ENCODE measurements at regions of chr2 and their contacts with region 1.

Region 1: GRCh38 chr2:64750817-64751285 is 97.1 kb upstream of the SERTAD2 start:
- DNase-seq: peak in 8 of 9 donors; percentile 87 to 97 (median 96)
- ATAC-seq: peak; percentile 90
- H3K4me3 ChIP-seq: peak overlapping the region; percentile 98
- H3K4me3 Mint-ChIP-seq: peak overlapping the region; percentile 91 to 100 (median 99)
- H3K27ac ChIP-seq: peak overlapping the region; percentile 91
- H3K27ac Mint-ChIP-seq: peak overlapping the region; percentile 91 to 99 (median 96)
- H3K4me1 ChIP-seq: peaks cover 3 to 13% of the 10 kb centered on the region in 2 donors
- H3K4me1 Mint-ChIP-seq: peaks cover 5 to 34% (median 29%) of the 10 kb centered on the region in 7 donors
- H3K27me3 ChIP-seq: no peaks in the 10 kb centered on the region
- H3K27me3 Mint-ChIP-seq: no peaks in the 10 kb centered on the region

Region 2: DNA sequence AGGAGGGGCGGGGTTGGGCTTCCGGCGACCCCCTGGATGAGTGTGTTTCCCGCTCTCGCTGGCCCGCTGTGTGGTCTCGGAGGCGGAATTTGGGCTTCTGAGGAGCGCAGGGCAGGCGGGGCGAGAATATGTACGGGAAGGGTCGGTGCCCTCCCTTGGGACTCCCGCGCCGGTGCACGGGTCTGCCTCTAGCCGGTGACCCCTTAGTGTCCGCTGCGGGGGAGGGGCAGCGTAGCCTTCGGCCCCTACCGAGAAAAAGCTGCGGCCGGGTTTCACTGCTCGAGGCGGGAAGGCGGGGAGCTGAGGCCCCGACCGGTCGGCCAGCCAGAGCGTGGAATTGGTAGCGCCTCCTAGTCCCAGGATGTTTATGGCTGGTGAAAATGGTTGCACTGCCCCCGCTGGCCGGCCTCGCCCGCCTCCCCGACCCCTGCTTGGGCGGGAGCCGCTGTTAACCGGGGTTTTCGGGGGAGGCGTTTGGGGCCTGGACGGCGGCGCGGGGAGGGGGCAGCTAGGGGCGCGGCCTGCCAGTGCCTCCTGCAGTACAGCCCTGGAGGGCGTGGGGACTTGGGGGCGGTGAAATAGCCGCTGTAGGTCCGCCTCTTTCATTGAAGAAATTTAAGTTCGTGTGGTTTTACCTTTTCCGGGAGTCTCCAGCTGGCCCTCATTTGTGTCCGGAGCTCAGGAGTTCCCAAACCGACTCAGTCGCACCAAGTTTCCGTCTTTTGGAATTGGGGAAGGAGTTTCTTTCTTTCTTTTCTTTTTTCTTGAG is 909.4 kb before region 1 on chr2 and contains the start of gene UGP2:
- CTCF ChIA-PET with region 1: no interaction called
- POLR2A ChIA-PET with region 1: no interaction called
- intact Hi-C with region 1: loop called (anchors 1 to 5 kb)
- DNase-seq: peak; percentile 68 to 89 (median 83)
- ATAC-seq: peak; percentile 77
- H3K4me3 ChIP-seq: peak within 1 kb of the TSS; percentile 82
- H3K4me3 Mint-ChIP-seq: peak within 1 kb of the TSS; percentile 97 to 100 (median 99)
- H3K27ac ChIP-seq: peak within 1 kb of the TSS; percentile 90
- H3K27ac Mint-ChIP-seq: peak within 1 kb of the TSS; percentile 95 to 99 (median 97)
- H3K4me1 ChIP-seq: peaks cover 5 to 24% of the 10 kb centered on the region in 2 donors
- H3K4me1 Mint-ChIP-seq: peaks cover 27 to 60% (median 53%) of the 10 kb centered on the region in 7 donors
- H3K27me3 ChIP-seq: no peaks in the 10 kb centered on the region
- H3K27me3 Mint-ChIP-seq: peaks cover 0 to 14% (median 0%) of the 10 kb centered on the region in 5 donors
- total RNA-seq, gene UGP2: 69.5 to 134 (median 92.4) TPM

Region 3: DNA sequence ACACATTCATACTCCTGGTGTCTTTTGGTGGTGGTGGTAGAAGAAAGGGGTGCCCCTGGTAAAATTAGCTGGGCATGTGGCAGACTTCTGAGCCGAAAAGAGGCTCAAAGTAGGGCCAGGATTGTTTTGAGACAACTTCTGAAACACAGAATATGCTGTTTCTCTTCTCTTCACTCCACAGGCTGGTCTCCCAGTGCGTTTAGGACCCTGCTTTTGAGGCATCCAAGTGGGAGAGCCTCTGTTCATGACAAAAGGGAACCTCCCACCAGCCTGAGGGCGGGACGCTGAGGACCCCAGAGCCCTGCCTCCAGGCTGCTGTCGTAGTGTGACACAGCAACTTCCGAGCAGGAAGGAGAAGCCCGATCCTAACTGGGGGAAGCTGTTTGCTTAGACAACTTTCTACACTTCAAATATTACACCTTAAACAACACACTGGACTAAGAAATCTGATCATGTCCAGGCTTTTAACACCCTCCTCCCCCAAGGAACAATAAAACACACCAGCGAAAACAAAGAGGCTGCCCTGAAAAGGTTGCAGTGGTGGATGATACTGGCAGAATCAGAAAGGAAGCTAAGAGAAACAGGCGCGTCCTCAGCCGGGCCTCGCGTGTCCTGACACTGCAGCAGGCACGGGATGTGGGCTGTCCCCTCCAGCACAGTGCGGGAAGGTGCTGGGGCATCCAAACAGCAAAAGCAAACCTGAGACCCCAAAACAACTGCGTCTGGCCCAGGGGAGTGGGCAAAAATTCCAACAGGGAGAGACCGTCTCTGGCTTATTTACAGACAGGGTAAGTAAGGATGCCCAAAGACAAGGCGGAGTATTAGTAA is 106.5 kb before region 1 on chr2:
- CTCF ChIA-PET with region 1: interaction called, 34 read pairs
- POLR2A ChIA-PET with region 1: interaction called, 433 read pairs
- intact Hi-C with region 1: loop called (anchors 1 to 2 kb)
- DNase-seq: peak in 8 of 9 donors; percentile 48 to 57 (median 53)
- ATAC-seq: peak; percentile 79
- H3K4me3 ChIP-seq: peak overlapping the region; percentile 62
- H3K4me3 Mint-ChIP-seq: peak overlapping the region; percentile 80 to 93 (median 90)
- H3K27ac ChIP-seq: peak overlapping the region; percentile 52
- H3K27ac Mint-ChIP-seq: peak overlapping the region; percentile 34 to 94 (median 88)
- H3K4me1 ChIP-seq: peaks cover 4 to 72% of the 10 kb centered on the region in 2 donors
- H3K4me1 Mint-ChIP-seq: peaks cover 45 to 100% (median 89%) of the 10 kb centered on the region in 7 donors
- H3K27me3 ChIP-seq: no peaks in the 10 kb centered on the region
- H3K27me3 Mint-ChIP-seq: no peaks in the 10 kb centered on the region

Region 4: DNA sequence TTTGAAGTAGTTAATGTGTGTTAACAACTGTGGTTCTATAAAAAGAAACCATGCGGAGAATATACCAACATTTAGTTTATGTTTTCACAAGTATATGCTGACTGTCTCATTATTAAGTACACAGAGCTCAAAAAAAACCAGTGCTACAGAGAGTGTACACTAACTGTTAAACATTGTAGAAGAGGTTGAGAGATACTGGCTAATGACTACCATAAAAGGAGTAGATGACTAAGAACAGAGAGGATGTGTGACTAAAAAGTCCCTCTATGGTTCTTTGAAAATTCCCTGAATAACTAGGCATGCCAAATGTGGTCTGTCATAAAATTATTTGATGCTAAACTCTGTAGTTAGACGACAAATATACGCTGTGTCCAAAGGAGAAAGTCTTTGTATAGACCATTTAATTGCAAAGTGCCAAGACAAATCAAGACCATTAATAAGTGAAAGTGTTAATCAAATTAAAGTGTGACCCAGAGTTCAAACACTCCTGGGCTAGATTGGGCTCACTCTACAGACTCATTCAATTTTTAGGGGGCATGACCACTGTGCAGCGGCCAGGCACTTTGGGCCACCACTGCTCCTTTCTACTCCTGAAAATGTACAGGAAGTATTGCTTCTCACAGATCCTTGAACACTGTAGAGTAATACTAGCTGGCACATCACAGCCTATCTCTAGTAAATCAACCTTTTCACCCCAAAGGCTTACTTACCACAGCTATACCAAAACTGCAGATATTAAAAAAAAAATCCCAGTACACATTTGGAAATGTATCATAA is 52.0 kb before region 1 on chr2:
- CTCF ChIA-PET with region 1: no interaction called
- POLR2A ChIA-PET with region 1: interaction called, 4 read pairs
- intact Hi-C with region 1: loop called in 1 of 2 experiments (anchors 1 kb)
- DNase-seq: no peak
- ATAC-seq: peak; percentile 76
- H3K4me3 ChIP-seq: no peak overlapping the region
- H3K4me3 Mint-ChIP-seq: peak overlapping the region in 1 of 10 donors; percentile 80
- H3K27ac ChIP-seq: no peak overlapping the region
- H3K27ac Mint-ChIP-seq: peak overlapping the region in 4 of 9 donors; percentile 2 to 79 (median 36)
- H3K4me1 ChIP-seq: peaks cover 8 to 12% of the 10 kb centered on the region in 2 donors
- H3K4me1 Mint-ChIP-seq: peaks cover 21 to 59% (median 41%) of the 10 kb centered on the region in 7 donors
- H3K27me3 ChIP-seq: no peaks in the 10 kb centered on the region
- H3K27me3 Mint-ChIP-seq: no peaks in the 10 kb centered on the region

Region 5: DNA sequence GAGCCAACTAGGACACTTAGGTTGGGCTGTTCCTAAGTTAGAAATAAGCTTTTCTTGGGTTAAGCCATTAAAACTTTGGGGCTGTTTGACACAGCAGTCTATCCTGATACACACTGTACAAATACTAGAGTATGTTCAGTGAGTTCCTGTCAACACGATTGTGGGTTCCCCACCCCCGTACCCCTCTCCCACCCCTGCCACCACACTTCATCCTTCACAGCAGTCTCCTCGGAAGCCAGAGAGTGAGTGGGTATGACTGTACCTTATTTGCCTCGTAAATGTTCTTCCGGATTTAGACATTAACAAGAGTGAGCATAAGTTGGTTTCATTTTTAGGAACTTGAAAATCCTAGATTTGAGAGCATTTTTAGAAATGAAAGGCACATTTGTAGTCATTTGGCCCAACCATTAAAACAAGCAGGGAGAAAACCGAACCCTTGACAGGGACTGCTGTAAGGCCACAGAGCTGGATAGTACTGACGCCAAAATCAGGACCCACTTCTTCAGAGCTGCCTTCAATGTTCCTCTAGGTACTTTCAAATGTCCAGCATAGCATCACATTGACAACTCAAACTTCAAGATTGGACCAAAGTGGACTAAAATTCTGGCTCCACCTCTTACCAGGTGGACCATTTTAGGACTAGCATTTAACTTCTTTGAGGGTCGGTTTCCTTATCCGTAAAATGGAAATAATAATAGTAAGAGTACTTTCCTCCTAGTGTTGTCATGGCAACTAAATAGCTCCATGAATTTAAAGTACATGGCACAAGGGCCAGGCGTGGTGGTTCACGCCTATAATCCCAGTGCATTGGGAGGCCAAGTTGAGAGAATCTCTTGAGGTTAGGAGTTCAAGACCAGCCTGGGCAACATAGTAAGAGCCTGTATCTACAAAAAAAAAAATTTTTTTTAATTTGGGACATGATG is 69.2 kb after region 1 on chr2:
- CTCF ChIA-PET with region 1: interaction called, 3 read pairs
- POLR2A ChIA-PET with region 1: interaction called, 36 read pairs
- intact Hi-C with region 1: loop called (anchors 1 to 2 kb)
- DNase-seq: peak in 8 of 9 donors; percentile 36 to 81 (median 66)
- ATAC-seq: peak; percentile 95
- H3K4me3 ChIP-seq: peak overlapping the region; percentile 19
- H3K4me3 Mint-ChIP-seq: peak overlapping the region; percentile 46 to 88 (median 77)
- H3K27ac ChIP-seq: peak overlapping the region; percentile 59
- H3K27ac Mint-ChIP-seq: peak overlapping the region; percentile 87 to 97 (median 95)
- H3K4me1 ChIP-seq: peaks cover 19 to 25% of the 10 kb centered on the region in 2 donors
- H3K4me1 Mint-ChIP-seq: peaks cover 12 to 41% (median 31%) of the 10 kb centered on the region in 7 donors
- H3K27me3 ChIP-seq: no peaks in the 10 kb centered on the region
- H3K27me3 Mint-ChIP-seq: no peaks in the 10 kb centered on the region

Region 6: GRCh38 chr2:65056215-65057053 is 305.6 kb after region 1 on chr2 and contains the start of gene CEP68:
- CTCF ChIA-PET with region 1: no interaction called
- POLR2A ChIA-PET with region 1: no interaction called
- intact Hi-C with region 1: loop called (anchors 1 kb)
- DNase-seq: peak; percentile 88 to 96 (median 95)
- ATAC-seq: peak; percentile 96
- H3K4me3 ChIP-seq: peak within 1 kb of the TSS; percentile 54
- H3K4me3 Mint-ChIP-seq: peak within 1 kb of the TSS; percentile 79 to 99 (median 94)
- H3K27ac ChIP-seq: peak within 1 kb of the TSS; percentile 76
- H3K27ac Mint-ChIP-seq: peak within 1 kb of the TSS; percentile 84 to 97 (median 90)
- H3K4me1 ChIP-seq: peaks cover 10 to 42% of the 10 kb centered on the region in 2 donors
- H3K4me1 Mint-ChIP-seq: peaks cover 41 to 81% (median 61%) of the 10 kb centered on the region in 7 donors
- H3K27me3 ChIP-seq: no peaks in the 10 kb centered on the region
- H3K27me3 Mint-ChIP-seq: peaks cover 0 to 2% (median 0%) of the 10 kb centered on the region in 5 donors
- total RNA-seq, gene CEP68: 8.5 to 52.0 (median 20.8) TPM

Region 7: DNA sequence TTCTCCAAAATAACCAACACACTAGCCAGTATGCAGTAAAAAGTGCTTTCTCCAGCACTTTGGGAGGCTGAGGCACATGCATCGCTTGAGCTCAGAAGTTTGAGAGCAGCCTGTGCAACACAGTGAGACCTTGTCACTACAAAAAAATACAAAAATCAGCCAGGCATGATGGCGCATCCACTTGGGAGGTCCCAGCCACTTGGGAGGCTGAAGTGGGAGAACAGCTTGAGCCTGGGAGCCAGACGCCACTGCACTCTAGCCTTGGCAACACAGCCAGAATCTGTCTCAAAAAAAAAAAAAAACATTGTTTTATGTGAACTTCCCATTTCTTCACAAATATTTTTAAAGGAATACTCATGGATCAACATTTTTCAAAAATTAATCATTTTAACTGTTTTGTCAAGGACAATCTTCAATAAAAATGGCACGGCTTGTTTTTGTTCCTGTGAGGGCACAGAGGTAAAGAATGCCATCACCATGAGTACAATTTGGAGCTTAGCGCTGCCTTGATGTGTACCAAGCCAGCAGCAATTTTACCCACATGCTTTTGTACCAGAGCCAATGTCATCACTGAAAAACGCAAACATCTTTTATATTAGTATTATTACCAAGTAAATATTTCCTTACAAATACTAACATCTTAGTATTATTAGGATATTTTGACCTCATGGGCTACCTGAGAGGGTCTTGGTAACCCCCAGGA is 352.3 kb after region 1 on chr2:
- CTCF ChIA-PET with region 1: no interaction called
- POLR2A ChIA-PET with region 1: no interaction called
- intact Hi-C with region 1: no loop called
- DNase-seq: no peak
- ATAC-seq: no peak
- H3K4me3 ChIP-seq: no peak overlapping the region
- H3K4me3 Mint-ChIP-seq: no peak overlapping the region
- H3K27ac ChIP-seq: no peak overlapping the region
- H3K27ac Mint-ChIP-seq: peak overlapping the region in 1 of 9 donors; percentile 33
- H3K4me1 ChIP-seq: no peaks in the 10 kb centered on the region
- H3K4me1 Mint-ChIP-seq: peaks cover 16 to 47% (median 38%) of the 10 kb centered on the region in 7 donors
- H3K27me3 ChIP-seq: no peaks in the 10 kb centered on the region
- H3K27me3 Mint-ChIP-seq: no peaks in the 10 kb centered on the region

Measured in naive thymus-derived CD4-positive, alpha-beta T cell (primary cell).